Left lung (tissue), 14 donors: ENCODE measurements at regions of chr6 and their contacts with region 1.

Region 1: GRCh38 chr6:2999618-3000557 is at the start of gene NQO2:
- DNase-seq: peak; percentile 80 to 99 (median 94)
- ATAC-seq: peak; percentile 95
- H3K4me3 ChIP-seq: peak within 1 kb of the TSS; percentile 76 to 79
- H3K27ac ChIP-seq: peak within 1 kb of the TSS; percentile 60 to 92
- H3K4me1 ChIP-seq: peaks cover 11 to 38% of the 10 kb centered on the region in 2 donors
- H3K27me3 ChIP-seq: no peaks in the 10 kb centered on the region
- CTCF ChIP-seq: no peak
- polyA plus RNA-seq, gene NQO2: 25.6 to 37.2 (median 31.7) TPM

Region 2: DNA sequence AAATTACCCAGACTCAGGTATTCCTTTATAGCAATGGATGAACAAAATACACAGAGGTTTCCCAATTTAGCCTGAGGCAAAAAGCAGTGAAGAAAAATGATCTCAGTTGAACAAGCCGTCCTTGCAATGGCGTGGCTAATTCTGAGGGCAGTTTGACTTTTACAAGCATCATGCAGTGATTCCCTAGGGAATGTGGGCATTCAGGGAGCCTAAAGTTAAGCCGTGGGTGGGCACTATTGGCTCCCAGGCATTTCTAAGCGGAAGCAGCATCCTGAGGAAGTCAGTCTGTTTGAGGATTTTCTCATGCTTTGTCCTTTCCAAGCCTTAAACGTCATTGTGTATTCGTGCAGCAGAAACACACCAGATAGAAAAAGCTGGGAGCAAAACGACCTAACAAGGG is 383.1 kb before region 1 on chr6:
- intact Hi-C with region 1: no loop called
- DNase-seq: no peak
- ATAC-seq: no peak
- H3K4me3 ChIP-seq: no peak overlapping the region
- H3K27ac ChIP-seq: no peak overlapping the region
- H3K4me1 ChIP-seq: no peaks in the 10 kb centered on the region
- H3K27me3 ChIP-seq: no peaks in the 10 kb centered on the region
- CTCF ChIP-seq: no peak

Region 3: GRCh38 chr6:3052481-3053230 is 52.8 kb after region 1 on chr6:
- intact Hi-C with region 1: loop called in 1 of 2 experiments (anchors 2 kb)
- DNase-seq: no peak
- ATAC-seq: no peak
- H3K4me3 ChIP-seq: peak overlapping the region in 1 of 2 donors; percentile 58
- H3K27ac ChIP-seq: peak overlapping the region in 1 of 2 donors; percentile 82
- H3K4me1 ChIP-seq: peaks cover 4 to 31% of the 10 kb centered on the region in 2 donors
- H3K27me3 ChIP-seq: no peaks in the 10 kb centered on the region
- CTCF ChIP-seq: no peak